MCF 10A (cell line): ENCODE measurements at regions of chr12 and their contacts with region 1.

Region 1: DNA sequence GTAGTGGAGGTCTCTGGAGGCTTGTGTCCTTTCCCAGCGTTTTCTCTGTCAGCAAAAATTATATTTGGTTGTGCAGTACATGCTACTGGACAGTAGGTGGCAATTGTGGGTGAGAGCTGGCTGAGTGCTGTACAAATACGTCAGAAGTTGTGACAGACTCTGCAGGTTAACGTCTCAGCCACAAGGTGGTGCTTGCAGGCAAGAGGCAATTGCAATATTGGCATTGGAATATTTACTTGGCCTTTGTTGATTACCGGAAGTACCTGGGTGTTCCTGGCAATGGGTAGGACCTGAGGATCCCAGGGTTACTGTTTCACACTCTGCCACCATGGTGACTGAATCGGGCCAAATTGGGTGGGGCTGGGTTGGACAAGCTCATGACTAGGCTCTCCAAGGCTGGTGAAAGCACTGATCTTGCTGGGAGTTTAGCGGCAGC is 333.9 kb upstream of the LMO3 start:
- DNase-seq: peak; percentile 78
- H3K4me3 Mint-ChIP-seq: no peak overlapping the region
- H3K27ac Mint-ChIP-seq: no peak overlapping the region
- H3K4me1 Mint-ChIP-seq: peaks cover 5% of the 10 kb centered on the region
- H3K27me3 Mint-ChIP-seq: peaks cover 28% of the 10 kb centered on the region
- CTCF ChIP-seq: peak; percentile 93

Region 2: GRCh38 chr12:16927259-16927658 is 12.6 kb before region 1 on chr12:
- CTCF ChIA-PET with region 1: interaction called, 14 read pairs
- POLR2A ChIA-PET with region 1: no interaction called
- intact Hi-C with region 1: no loop called
- DNase-seq: no peak
- H3K4me3 Mint-ChIP-seq: no peak overlapping the region
- H3K27ac Mint-ChIP-seq: no peak overlapping the region
- H3K4me1 Mint-ChIP-seq: no peaks in the 10 kb centered on the region
- H3K27me3 Mint-ChIP-seq: no peaks in the 10 kb centered on the region
- CTCF ChIP-seq: no peak

Region 3: DNA sequence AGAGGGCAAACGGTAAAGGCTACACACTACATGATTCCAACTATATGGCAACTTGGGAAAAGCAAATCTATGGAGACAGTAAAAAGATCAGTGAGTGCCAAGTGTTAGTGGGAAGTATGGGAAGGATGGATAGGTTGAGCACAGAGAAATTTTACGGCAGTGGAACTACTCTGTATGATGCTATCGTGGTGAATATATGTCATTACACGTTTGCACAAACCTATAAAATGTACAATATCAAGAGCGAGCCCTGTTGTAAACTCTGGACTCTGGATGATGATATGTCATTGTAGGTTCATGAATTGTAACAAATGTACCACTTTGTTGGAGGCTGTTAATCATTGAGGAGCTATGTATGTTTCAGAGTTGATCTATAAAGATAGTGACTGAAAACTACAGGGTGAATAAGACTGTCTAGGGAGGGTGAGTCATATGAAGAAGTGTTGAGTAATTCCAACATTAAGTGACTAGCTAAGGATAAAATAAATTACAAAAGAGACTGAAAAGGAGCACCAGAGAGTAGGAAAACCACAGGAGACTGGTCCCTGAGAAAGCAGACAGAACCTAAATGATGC is 15.3 kb after region 1 on chr12:
- CTCF ChIA-PET with region 1: interaction called, 19 read pairs
- POLR2A ChIA-PET with region 1: no interaction called
- intact Hi-C with region 1: no loop called
- DNase-seq: peak; percentile 55
- H3K4me3 Mint-ChIP-seq: no peak overlapping the region
- H3K27ac Mint-ChIP-seq: no peak overlapping the region
- H3K4me1 Mint-ChIP-seq: peaks cover 11% of the 10 kb centered on the region
- H3K27me3 Mint-ChIP-seq: peaks cover 10% of the 10 kb centered on the region
- CTCF ChIP-seq: no peak

Region 4: DNA sequence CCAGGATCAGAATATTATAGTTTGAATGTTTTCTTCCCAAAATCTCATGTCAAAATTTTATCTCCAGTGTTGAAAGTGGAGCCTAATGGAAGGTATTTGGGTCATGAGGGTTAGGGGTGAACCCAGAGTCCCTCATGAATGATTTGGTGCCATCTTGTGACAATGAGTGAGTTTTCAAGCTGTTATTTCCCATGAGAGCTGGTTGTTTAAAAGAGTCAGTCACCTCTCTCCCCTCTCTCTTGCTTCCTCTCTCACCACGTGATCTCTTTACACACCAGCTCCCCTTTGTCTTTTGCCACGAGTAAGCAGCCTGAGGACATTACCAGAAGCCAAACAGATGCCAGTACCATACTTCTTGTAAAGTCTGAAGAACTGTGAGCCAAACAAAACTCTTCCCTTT is 588.5 kb after region 1 on chr12:
- CTCF ChIA-PET with region 1: interaction called, 3 read pairs
- POLR2A ChIA-PET with region 1: no interaction called
- intact Hi-C with region 1: loop called (anchors 10 kb)
- DNase-seq: no peak
- H3K4me3 Mint-ChIP-seq: no peak overlapping the region
- H3K27ac Mint-ChIP-seq: no peak overlapping the region
- H3K4me1 Mint-ChIP-seq: no peaks in the 10 kb centered on the region
- H3K27me3 Mint-ChIP-seq: peaks cover 30% of the 10 kb centered on the region
- CTCF ChIP-seq: no peak

Region 5: GRCh38 chr12:17642340-17642650 is 702.4 kb after region 1 on chr12:
- CTCF ChIA-PET with region 1: interaction called, 17 read pairs
- POLR2A ChIA-PET with region 1: no interaction called
- intact Hi-C with region 1: loop called (anchors 1 kb)
- DNase-seq: no peak
- H3K4me3 Mint-ChIP-seq: peak overlapping the region; percentile 44
- H3K27ac Mint-ChIP-seq: no peak overlapping the region
- H3K4me1 Mint-ChIP-seq: no peaks in the 10 kb centered on the region
- H3K27me3 Mint-ChIP-seq: peaks cover 44% of the 10 kb centered on the region
- CTCF ChIP-seq: no peak

Region 6: GRCh38 chr12:17992002-17992656 is 1052.2 kb after region 1 on chr12:
- CTCF ChIA-PET with region 1: no interaction called
- POLR2A ChIA-PET with region 1: no interaction called
- intact Hi-C with region 1: loop called (anchors 5 kb)
- DNase-seq: peak; percentile 56
- H3K4me3 Mint-ChIP-seq: no peak overlapping the region
- H3K27ac Mint-ChIP-seq: no peak overlapping the region
- H3K4me1 Mint-ChIP-seq: no peaks in the 10 kb centered on the region
- H3K27me3 Mint-ChIP-seq: peaks cover 55% of the 10 kb centered on the region
- CTCF ChIP-seq: peak; percentile 61